PC-9 (cell line): ENCODE measurements at regions of chr20 and their contacts with region 1.

Region 1: GRCh38 chr20:45592574-45593189 is 13.6 kb upstream of the WFDC8 start:
- DNase-seq: peak; percentile 28 to 70
- H3K4me3 ChIP-seq: no peak overlapping the region
- H3K27ac ChIP-seq: no peak overlapping the region
- H3K4me1 ChIP-seq: no peaks in the 10 kb centered on the region
- H3K27me3 ChIP-seq: peaks cover 7% of the 10 kb centered on the region; the same call in 1 of the 2 replicates
- CTCF ChIP-seq: peak; percentile 86

Region 2: GRCh38 chr20:45456632-45457031 is 136.1 kb before region 1 on chr20:
- CTCF ChIA-PET with region 1: no interaction called
- POLR2A ChIA-PET with region 1: no interaction called
- intact Hi-C with region 1: loop called (anchors 5 kb)
- DNase-seq: peak in 1 of 2 experiments; percentile 39
- H3K4me3 ChIP-seq: no peak overlapping the region
- H3K27ac ChIP-seq: no peak overlapping the region
- H3K4me1 ChIP-seq: peaks cover 14% of the 10 kb centered on the region; the same call in 1 of the 2 replicates
- H3K27me3 ChIP-seq: no peaks in the 10 kb centered on the region
- CTCF ChIP-seq: peak; percentile 53

Region 3: GRCh38 chr20:45523821-45524220 is 68.9 kb before region 1 on chr20:
- CTCF ChIA-PET with region 1: no interaction called
- POLR2A ChIA-PET with region 1: no interaction called
- intact Hi-C with region 1: no loop called
- DNase-seq: peak in 1 of 2 experiments; percentile 44
- H3K4me3 ChIP-seq: no peak overlapping the region; the same call in 1 of the 2 replicates
- H3K27ac ChIP-seq: peak overlapping the region; percentile 46
- H3K4me1 ChIP-seq: peaks cover 25% of the 10 kb centered on the region
- H3K27me3 ChIP-seq: no peaks in the 10 kb centered on the region
- CTCF ChIP-seq: no peak

Region 4: GRCh38 chr20:45735552-45735951 is 142.9 kb after region 1 on chr20:
- CTCF ChIA-PET with region 1: no interaction called
- POLR2A ChIA-PET with region 1: interaction called, 18 read pairs
- intact Hi-C with region 1: no loop called
- DNase-seq: no peak
- H3K4me3 ChIP-seq: no peak overlapping the region
- H3K27ac ChIP-seq: no peak overlapping the region
- H3K4me1 ChIP-seq: no peaks in the 10 kb centered on the region
- H3K27me3 ChIP-seq: no peaks in the 10 kb centered on the region
- CTCF ChIP-seq: no peak

Region 5: DNA sequence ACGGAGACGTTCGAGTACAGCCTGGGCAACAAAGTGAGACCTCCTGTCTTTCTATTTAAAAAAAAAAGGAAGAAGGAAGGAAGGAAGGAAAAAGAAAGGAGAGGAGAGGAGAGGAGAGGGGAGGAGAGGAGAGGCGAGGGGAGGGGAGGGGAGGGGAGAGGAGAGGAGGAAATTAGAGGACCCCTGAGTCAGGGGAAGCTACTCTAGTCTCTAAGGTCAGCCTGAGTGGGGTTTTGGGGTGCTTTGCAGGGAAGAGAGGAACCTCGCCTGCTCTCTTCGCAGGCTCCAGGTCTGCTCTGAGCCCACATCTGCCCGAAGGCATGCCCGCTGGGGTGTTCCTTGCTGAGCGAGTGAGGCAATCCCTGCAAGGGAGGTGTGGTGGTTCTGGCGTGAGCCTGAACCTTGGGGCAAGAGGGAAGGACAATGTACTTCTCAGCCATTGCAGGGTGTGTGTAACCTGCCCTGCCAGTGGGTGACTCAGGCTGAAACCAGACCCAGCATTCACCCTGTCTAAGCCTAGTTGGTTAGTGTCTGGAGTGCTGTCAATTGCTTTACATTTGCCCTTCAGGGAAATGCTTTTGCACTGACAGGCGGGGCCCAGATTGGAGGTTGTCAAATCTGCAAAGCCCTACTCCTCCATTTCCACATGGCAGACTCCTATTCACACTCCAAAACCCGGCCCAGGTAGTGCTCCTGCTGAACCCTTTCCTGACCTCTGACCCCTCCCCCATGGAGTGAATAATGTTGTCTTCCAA is 400.7 kb after region 1 on chr20:
- CTCF ChIA-PET with region 1: no interaction called
- POLR2A ChIA-PET with region 1: no interaction called
- intact Hi-C with region 1: loop called (anchors 10 kb)
- DNase-seq: peak; percentile 95 to 99
- H3K4me3 ChIP-seq: no peak overlapping the region; the same call in 1 of the 2 replicates
- H3K27ac ChIP-seq: peak overlapping the region; percentile 66
- H3K4me1 ChIP-seq: peaks cover 50% of the 10 kb centered on the region
- H3K27me3 ChIP-seq: no peaks in the 10 kb centered on the region
- CTCF ChIP-seq: no peak